CD8-positive, alpha-beta memory T cell (primary cell): ENCODE measurements at regions of chr11 and their contacts with region 1.

Region 1: GRCh38 chr11:2151500-2152257 is 9.3 kb downstream of the INS start:
- DNase-seq: peak; percentile 67 to 86 (median 71)
- H3K4me3 ChIP-seq: peak overlapping the region; percentile 23
- H3K4me3 Mint-ChIP-seq: peak overlapping the region in 6 of 7 donors; percentile 30 to 81 (median 58)
- H3K27ac ChIP-seq: no peak overlapping the region
- H3K27ac Mint-ChIP-seq: peak overlapping the region in 3 of 8 donors; percentile 51 to 79 (median 61)
- H3K4me1 ChIP-seq: peaks cover 6% of the 10 kb centered on the region
- H3K4me1 Mint-ChIP-seq: peaks cover 7 to 8% (median 7%) of the 10 kb centered on the region in 3 donors
- H3K27me3 ChIP-seq: peaks cover 13% of the 10 kb centered on the region
- H3K27me3 Mint-ChIP-seq: peaks cover 24 to 32% of the 10 kb centered on the region in 2 donors

Region 2: GRCh38 chr11:1852877-1853276 is 298.8 kb before region 1 on chr11 and contains the start of gene LSP1:
- CTCF ChIA-PET with region 1: interaction called, 12 read pairs
- POLR2A ChIA-PET with region 1: no interaction called
- DNase-seq: peak; percentile 69 to 93 (median 87)
- H3K4me3 ChIP-seq: peak within 1 kb of the TSS; percentile 63
- H3K4me3 Mint-ChIP-seq: peak within 1 kb of the TSS; percentile 92 to 99 (median 99)
- H3K27ac ChIP-seq: peak within 1 kb of the TSS; percentile 74
- H3K27ac Mint-ChIP-seq: peak within 1 kb of the TSS; percentile 90 to 100 (median 98)
- H3K4me1 ChIP-seq: peaks cover 81% of the 10 kb centered on the region
- H3K4me1 Mint-ChIP-seq: peaks cover 50 to 73% (median 55%) of the 10 kb centered on the region in 3 donors
- H3K27me3 ChIP-seq: no peaks in the 10 kb centered on the region
- H3K27me3 Mint-ChIP-seq: no peaks in the 10 kb centered on the region
- total RNA-seq, gene LSP1: 226 to 230 TPM

Region 3: GRCh38 chr11:1948389-1948788 is 203.3 kb before region 1 on chr11:
- CTCF ChIA-PET with region 1: interaction called, 11 read pairs
- POLR2A ChIA-PET with region 1: no interaction called
- DNase-seq: peak in 1 of 5 donors; percentile 23
- H3K4me3 ChIP-seq: no peak overlapping the region
- H3K4me3 Mint-ChIP-seq: peak overlapping the region in 3 of 7 donors; percentile 32 to 75 (median 39)
- H3K27ac ChIP-seq: no peak overlapping the region
- H3K27ac Mint-ChIP-seq: no peak overlapping the region
- H3K4me1 ChIP-seq: no peaks in the 10 kb centered on the region
- H3K4me1 Mint-ChIP-seq: no peaks in the 10 kb centered on the region
- H3K27me3 ChIP-seq: no peaks in the 10 kb centered on the region
- H3K27me3 Mint-ChIP-seq: no peaks in the 10 kb centered on the region

Region 4: DNA sequence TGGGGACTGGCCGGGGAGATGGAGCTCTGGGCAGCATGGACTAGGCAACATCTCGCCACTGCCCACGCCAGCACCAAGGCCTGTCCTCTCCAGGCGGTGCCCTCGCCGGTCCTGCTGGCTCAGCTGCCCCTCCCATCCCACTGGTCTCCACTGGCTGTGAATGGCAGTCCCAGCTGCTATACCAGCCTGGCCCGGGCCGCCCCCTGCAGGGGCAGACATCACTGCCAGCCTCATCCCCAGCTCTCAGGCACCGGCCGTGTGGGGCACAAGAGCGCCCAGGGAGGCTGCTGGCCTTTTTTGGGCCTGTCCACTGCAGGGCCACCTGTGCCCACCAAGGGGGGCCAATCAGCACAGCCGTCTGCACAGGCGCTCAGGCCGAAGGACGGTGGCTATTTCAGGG is 124.0 kb before region 1 on chr11:
- CTCF ChIA-PET with region 1: interaction called, 12 read pairs
- POLR2A ChIA-PET with region 1: no interaction called
- DNase-seq: no peak
- H3K4me3 ChIP-seq: no peak overlapping the region
- H3K4me3 Mint-ChIP-seq: no peak overlapping the region
- H3K27ac ChIP-seq: no peak overlapping the region
- H3K27ac Mint-ChIP-seq: no peak overlapping the region
- H3K4me1 ChIP-seq: no peaks in the 10 kb centered on the region
- H3K4me1 Mint-ChIP-seq: no peaks in the 10 kb centered on the region
- H3K27me3 ChIP-seq: no peaks in the 10 kb centered on the region
- H3K27me3 Mint-ChIP-seq: no peaks in the 10 kb centered on the region